CD4-positive, alpha-beta T cell (primary cell): ENCODE measurements at regions of chr15 and their contacts with region 1.

Region 1: GRCh38 chr15:98647774-98648653 is at the start of gene IGF1R:
- DNase-seq: peak; percentile 79 to 95 (median 86)
- ATAC-seq: peak; percentile 65
- H3K4me3 ChIP-seq: peak within 1 kb of the TSS; percentile 81
- H3K4me3 Mint-ChIP-seq: peak within 1 kb of the TSS; percentile 95
- H3K27ac ChIP-seq: peak within 1 kb of the TSS in 1 of 2 donors; percentile 83
- H3K27ac Mint-ChIP-seq: peak within 1 kb of the TSS; percentile 91
- H3K4me1 ChIP-seq: peaks cover 33% of the 10 kb centered on the region
- H3K4me1 Mint-ChIP-seq: peaks cover 33% of the 10 kb centered on the region
- H3K27me3 ChIP-seq: peaks cover 16 to 17% of the 10 kb centered on the region in 2 experiments
- H3K27me3 Mint-ChIP-seq: peaks cover 27% of the 10 kb centered on the region
- CTCF ChIP-seq: peak; percentile 17
- total RNA-seq, gene IGF1R: 39.2 to 40.3 TPM

Region 2: DNA sequence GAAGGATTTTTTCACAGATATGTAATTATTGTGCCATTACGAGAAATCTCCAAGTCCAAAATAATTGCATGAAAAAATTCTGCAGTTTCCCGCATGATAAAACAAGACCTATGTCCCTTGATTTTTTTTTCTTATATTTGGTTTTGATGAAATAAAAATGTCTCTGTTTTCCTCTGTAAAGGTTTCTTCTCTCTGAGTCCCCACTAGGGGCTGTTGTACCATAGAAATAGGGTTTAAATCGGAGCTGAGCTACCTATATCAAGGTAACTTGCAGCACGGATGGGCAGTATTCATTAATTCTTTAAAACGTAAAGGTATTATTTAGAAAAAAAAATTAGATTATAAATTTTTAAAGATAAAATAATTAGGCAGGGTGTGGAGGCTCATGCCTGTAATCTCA is 66.3 kb before region 1 on chr15:
- CTCF ChIA-PET with region 1: interaction called, 3 read pairs
- POLR2A ChIA-PET with region 1: interaction called, 18 read pairs
- intact Hi-C with region 1: loop called (anchors 2 kb)
- DNase-seq: peak in 3 of 14 experiments; percentile 19 to 39 (median 33)
- ATAC-seq: peak; percentile 49
- H3K4me3 ChIP-seq: no peak overlapping the region
- H3K4me3 Mint-ChIP-seq: no peak overlapping the region
- H3K27ac ChIP-seq: no peak overlapping the region
- H3K27ac Mint-ChIP-seq: no peak overlapping the region
- H3K4me1 ChIP-seq: no peaks in the 10 kb centered on the region
- H3K4me1 Mint-ChIP-seq: peaks cover 9% of the 10 kb centered on the region
- H3K27me3 ChIP-seq: peaks cover 13 to 21% of the 10 kb centered on the region in 2 experiments
- H3K27me3 Mint-ChIP-seq: peaks cover 48% of the 10 kb centered on the region
- CTCF ChIP-seq: peak; percentile 45

Region 3: DNA sequence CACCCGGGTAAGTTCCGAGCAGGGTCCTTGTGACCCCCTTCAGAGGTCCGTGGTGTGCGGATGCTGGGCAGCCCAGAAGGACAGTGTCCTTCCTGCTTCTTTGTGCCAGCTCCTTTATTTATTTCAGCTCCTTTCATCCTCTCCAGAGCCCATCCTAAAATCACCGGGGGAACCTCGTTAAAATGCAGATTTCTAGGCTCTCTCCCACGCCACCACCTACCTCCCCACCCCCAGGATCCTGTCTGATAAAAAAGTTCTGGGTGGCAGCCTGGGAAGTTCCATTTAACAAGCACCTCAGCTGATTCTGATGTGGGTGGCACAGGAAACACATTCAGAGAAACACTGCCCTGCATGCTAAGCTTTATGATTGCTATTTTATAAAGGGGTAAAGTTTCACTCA is 12.2 kb before region 1 on chr15:
- CTCF ChIA-PET with region 1: interaction called, 3 read pairs
- POLR2A ChIA-PET with region 1: interaction called, 38 read pairs
- intact Hi-C with region 1: no loop called
- DNase-seq: peak in 3 of 14 experiments; percentile 12 to 29 (median 20)
- ATAC-seq: peak; percentile 48
- H3K4me3 ChIP-seq: no peak overlapping the region
- H3K4me3 Mint-ChIP-seq: peak overlapping the region; percentile 39
- H3K27ac ChIP-seq: no peak overlapping the region
- H3K27ac Mint-ChIP-seq: no peak overlapping the region
- H3K4me1 ChIP-seq: peaks cover 9% of the 10 kb centered on the region
- H3K4me1 Mint-ChIP-seq: peaks cover 14% of the 10 kb centered on the region
- H3K27me3 ChIP-seq: no peaks in the 10 kb centered on the region
- H3K27me3 Mint-ChIP-seq: peaks cover 9% of the 10 kb centered on the region
- CTCF ChIP-seq: no peak

Region 4: GRCh38 chr15:98764291-98764690 is 116.3 kb after region 1 on chr15:
- CTCF ChIA-PET with region 1: no interaction called
- POLR2A ChIA-PET with region 1: no interaction called
- intact Hi-C with region 1: no loop called
- DNase-seq: no peak
- ATAC-seq: no peak
- H3K4me3 ChIP-seq: no peak overlapping the region
- H3K4me3 Mint-ChIP-seq: no peak overlapping the region
- H3K27ac ChIP-seq: no peak overlapping the region
- H3K27ac Mint-ChIP-seq: no peak overlapping the region
- H3K4me1 ChIP-seq: peaks cover 2% of the 10 kb centered on the region
- H3K4me1 Mint-ChIP-seq: peaks cover 64% of the 10 kb centered on the region
- H3K27me3 ChIP-seq: no peaks in the 10 kb centered on the region
- H3K27me3 Mint-ChIP-seq: no peaks in the 10 kb centered on the region
- CTCF ChIP-seq: no peak

Region 5: DNA sequence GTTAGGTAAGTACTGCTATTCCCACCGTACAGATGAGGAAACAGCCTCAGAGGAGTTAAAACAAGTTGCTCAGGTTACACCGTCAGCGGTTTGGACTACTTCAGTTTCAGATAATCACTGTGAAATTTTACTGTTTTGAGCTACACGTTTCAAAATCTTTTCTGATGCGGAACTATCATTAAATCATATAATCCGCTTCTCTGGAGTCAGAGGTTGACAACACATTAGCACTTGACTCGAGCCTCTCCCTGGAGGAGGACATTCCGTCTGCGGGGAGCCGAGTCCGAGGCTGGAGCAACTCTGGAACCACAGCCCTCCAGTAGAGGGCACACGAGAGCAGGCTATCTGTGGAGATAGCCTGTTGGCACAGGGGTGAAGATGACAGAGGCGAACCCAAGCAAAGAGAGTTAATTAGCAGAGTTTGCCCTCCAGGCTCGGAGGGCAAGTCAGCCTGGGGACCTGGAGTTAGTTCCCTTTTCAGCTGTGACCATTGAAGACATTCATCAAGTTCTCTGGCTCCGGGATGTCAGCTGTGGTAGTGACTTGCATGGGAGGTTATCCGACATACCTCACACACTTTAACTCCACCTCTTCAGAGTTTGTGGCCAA is 131.6 kb after region 1 on chr15:
- CTCF ChIA-PET with region 1: no interaction called
- POLR2A ChIA-PET with region 1: interaction called, 3 read pairs
- intact Hi-C with region 1: loop called (anchors 5 to 10 kb)
- DNase-seq: peak; percentile 52 to 86 (median 66)
- ATAC-seq: peak; percentile 85
- H3K4me3 ChIP-seq: no peak overlapping the region
- H3K4me3 Mint-ChIP-seq: peak overlapping the region; percentile 46
- H3K27ac ChIP-seq: no peak overlapping the region
- H3K27ac Mint-ChIP-seq: no peak overlapping the region
- H3K4me1 ChIP-seq: peaks cover 27% of the 10 kb centered on the region
- H3K4me1 Mint-ChIP-seq: peaks cover 50% of the 10 kb centered on the region
- H3K27me3 ChIP-seq: no peaks in the 10 kb centered on the region
- H3K27me3 Mint-ChIP-seq: no peaks in the 10 kb centered on the region
- CTCF ChIP-seq: peak; percentile 92

Region 6: GRCh38 chr15:99565299-99566156 is 917.5 kb after region 1 on chr15 and contains the start of gene MEF2A:
- CTCF ChIA-PET with region 1: no interaction called
- POLR2A ChIA-PET with region 1: no interaction called
- intact Hi-C with region 1: loop called in 1 of 2 experiments (anchors 5 kb)
- DNase-seq: peak; percentile 84 to 96 (median 88)
- ATAC-seq: peak; percentile 69
- H3K4me3 ChIP-seq: peak within 1 kb of the TSS; percentile 97
- H3K4me3 Mint-ChIP-seq: peak within 1 kb of the TSS; percentile 97
- H3K27ac ChIP-seq: peak within 1 kb of the TSS; percentile 86 to 94
- H3K27ac Mint-ChIP-seq: peak within 1 kb of the TSS; percentile 96
- H3K4me1 ChIP-seq: peaks cover 22% of the 10 kb centered on the region
- H3K4me1 Mint-ChIP-seq: peaks cover 57% of the 10 kb centered on the region
- H3K27me3 ChIP-seq: no peaks in the 10 kb centered on the region
- H3K27me3 Mint-ChIP-seq: no peaks in the 10 kb centered on the region
- CTCF ChIP-seq: no peak
- total RNA-seq, gene MEF2A: 23.2 to 24.9 TPM